T-cell (primary cell): ENCODE measurements at regions of chr11 and their contacts with region 1.

Region 1: DNA sequence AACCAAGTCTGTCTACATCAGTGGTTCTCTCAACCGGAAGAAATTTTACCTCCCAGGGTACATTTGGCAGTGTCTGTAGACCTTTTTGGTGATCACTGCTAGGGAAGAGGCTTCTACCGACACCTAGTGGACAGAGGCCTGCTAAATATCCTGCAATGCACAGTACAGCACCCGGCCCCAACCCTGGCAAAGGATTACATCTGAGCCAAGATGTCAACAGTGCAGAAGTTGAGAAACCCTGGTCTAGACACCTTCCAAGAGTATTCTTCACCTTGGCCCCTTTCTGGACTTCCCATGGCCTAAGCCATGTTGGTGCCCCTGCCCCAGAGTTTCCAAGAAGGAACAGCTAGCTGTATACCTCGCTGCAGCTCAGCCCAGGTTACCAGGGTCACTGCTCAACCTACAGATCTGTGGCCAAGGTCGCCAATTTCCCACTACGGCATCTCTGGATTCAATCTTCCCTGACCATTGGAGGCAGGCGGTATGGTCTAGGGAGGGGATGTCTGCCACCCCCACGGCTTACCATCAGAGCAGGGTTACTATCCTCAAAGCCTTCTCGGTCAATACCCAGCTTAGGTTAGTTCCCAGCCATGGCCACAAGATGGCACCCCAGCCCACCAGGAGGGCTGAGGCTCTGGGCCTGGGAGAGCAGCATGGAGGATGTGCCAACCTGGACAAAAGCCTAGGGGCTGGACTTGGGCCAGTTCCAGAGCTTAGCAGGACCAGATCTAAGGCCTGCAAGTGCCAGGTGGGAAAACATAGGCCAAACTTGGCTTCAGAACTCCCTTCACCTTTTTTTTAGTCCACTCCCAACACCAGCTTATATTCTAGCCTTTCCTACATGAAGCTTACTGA is 3.7 kb upstream of the KCNC1 start:
- DNase-seq: peak in 29 of 35 experiments; percentile 9 to 57 (median 35)
- ATAC-seq: peak; percentile 52 to 78 (median 64)
- H3K4me3 ChIP-seq: no peak overlapping the region
- H3K4me3 Mint-ChIP-seq: no peak overlapping the region
- H3K27ac ChIP-seq: no peak overlapping the region
- H3K27ac Mint-ChIP-seq: no peak overlapping the region
- H3K4me1 ChIP-seq: no peaks in the 10 kb centered on the region
- H3K4me1 Mint-ChIP-seq: peaks cover 0 to 7% (median 5%) of the 10 kb centered on the region in 3 donors
- H3K27me3 ChIP-seq: peaks cover 5 to 41% of the 10 kb centered on the region in 2 experiments
- H3K27me3 Mint-ChIP-seq: peaks cover 49 to 58% of the 10 kb centered on the region in 2 donors

Region 2: GRCh38 chr11:17752144-17752543 is 21.3 kb after region 1 on chr11:
- CTCF ChIA-PET with region 1: no interaction called
- POLR2A ChIA-PET with region 1: no interaction called
- DNase-seq: no peak
- ATAC-seq: no peak
- H3K4me3 ChIP-seq: no peak overlapping the region
- H3K4me3 Mint-ChIP-seq: no peak overlapping the region
- H3K27ac ChIP-seq: no peak overlapping the region
- H3K27ac Mint-ChIP-seq: no peak overlapping the region
- H3K4me1 ChIP-seq: no peaks in the 10 kb centered on the region
- H3K4me1 Mint-ChIP-seq: no peaks in the 10 kb centered on the region
- H3K27me3 ChIP-seq: peaks cover 0 to 39% of the 10 kb centered on the region in 2 experiments
- H3K27me3 Mint-ChIP-seq: peaks cover 14 to 30% of the 10 kb centered on the region in 2 donors

Region 3: GRCh38 chr11:17978553-17979287 is 247.9 kb after region 1 on chr11:
- CTCF ChIA-PET with region 1: interaction called, 4 to 33 read pairs
- POLR2A ChIA-PET with region 1: no interaction called
- DNase-seq: peak in 4 of 35 experiments; percentile 4 to 11 (median 4)
- ATAC-seq: no peak
- H3K4me3 ChIP-seq: no peak overlapping the region
- H3K4me3 Mint-ChIP-seq: no peak overlapping the region
- H3K27ac ChIP-seq: no peak overlapping the region
- H3K27ac Mint-ChIP-seq: no peak overlapping the region
- H3K4me1 ChIP-seq: no peaks in the 10 kb centered on the region
- H3K4me1 Mint-ChIP-seq: peaks cover 4 to 5% (median 4%) of the 10 kb centered on the region in 3 donors
- H3K27me3 ChIP-seq: no peaks in the 10 kb centered on the region
- H3K27me3 Mint-ChIP-seq: no peaks in the 10 kb centered on the region